B cell (primary cell): ENCODE measurements at regions of chr14 and their contacts with region 1.

Region 1: DNA sequence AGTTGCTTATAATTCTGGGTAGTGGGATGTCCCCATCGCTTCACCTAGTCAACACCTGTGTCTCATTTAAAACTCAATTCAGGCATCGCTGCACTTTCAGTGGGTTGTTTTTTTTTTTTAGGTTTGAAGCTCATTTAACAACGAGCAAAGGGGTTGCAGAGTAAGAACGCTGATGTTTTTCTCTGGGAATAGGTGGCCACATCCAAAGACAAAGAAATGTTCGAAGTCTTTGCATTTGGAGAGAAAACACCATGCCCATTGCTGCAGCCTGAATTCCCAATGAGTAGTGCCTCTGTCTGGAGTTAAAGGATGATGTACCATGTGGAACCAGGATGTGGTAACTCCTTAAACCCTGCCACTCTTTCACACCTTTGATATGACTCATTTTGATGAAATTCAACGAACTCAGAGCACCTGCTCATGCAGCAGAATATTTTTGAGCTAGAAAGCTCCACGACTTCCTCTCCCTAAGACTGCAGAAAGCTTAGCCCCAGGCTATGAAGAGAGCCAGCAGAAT is 35.1 kb upstream of the BATF start:
- DNase-seq: no peak
- ATAC-seq: no peak
- H3K4me3 ChIP-seq: no peak overlapping the region
- H3K4me3 Mint-ChIP-seq: no peak overlapping the region
- H3K27ac ChIP-seq: no peak overlapping the region
- H3K27ac Mint-ChIP-seq: peak overlapping the region; percentile 8
- H3K4me1 ChIP-seq: peaks cover 0 to 8% of the 10 kb centered on the region in 2 donors
- H3K4me1 Mint-ChIP-seq: peaks cover 12% of the 10 kb centered on the region
- H3K27me3 ChIP-seq: peaks cover 0 to 11% (median 0%) of the 10 kb centered on the region in 4 experiments
- H3K27me3 Mint-ChIP-seq: no peaks in the 10 kb centered on the region
- CTCF ChIP-seq: no peak

Region 2: GRCh38 chr14:75132382-75133086 is 354.7 kb before region 1 on chr14:
- CTCF ChIA-PET with region 1: interaction called, 7 read pairs
- POLR2A ChIA-PET with region 1: no interaction called
- intact Hi-C with region 1: loop called (anchors 1 kb)
- DNase-seq: peak; percentile 85
- ATAC-seq: peak; percentile 95
- H3K4me3 ChIP-seq: no peak overlapping the region
- H3K4me3 Mint-ChIP-seq: no peak overlapping the region
- H3K27ac ChIP-seq: peak overlapping the region in 1 of 2 donors; percentile 49
- H3K27ac Mint-ChIP-seq: peak overlapping the region; percentile 3
- H3K4me1 ChIP-seq: peaks cover 4 to 5% of the 10 kb centered on the region in 2 donors
- H3K4me1 Mint-ChIP-seq: peaks cover 14% of the 10 kb centered on the region
- H3K27me3 ChIP-seq: no peaks in the 10 kb centered on the region
- H3K27me3 Mint-ChIP-seq: no peaks in the 10 kb centered on the region
- CTCF ChIP-seq: peak; percentile 78

Region 3: DNA sequence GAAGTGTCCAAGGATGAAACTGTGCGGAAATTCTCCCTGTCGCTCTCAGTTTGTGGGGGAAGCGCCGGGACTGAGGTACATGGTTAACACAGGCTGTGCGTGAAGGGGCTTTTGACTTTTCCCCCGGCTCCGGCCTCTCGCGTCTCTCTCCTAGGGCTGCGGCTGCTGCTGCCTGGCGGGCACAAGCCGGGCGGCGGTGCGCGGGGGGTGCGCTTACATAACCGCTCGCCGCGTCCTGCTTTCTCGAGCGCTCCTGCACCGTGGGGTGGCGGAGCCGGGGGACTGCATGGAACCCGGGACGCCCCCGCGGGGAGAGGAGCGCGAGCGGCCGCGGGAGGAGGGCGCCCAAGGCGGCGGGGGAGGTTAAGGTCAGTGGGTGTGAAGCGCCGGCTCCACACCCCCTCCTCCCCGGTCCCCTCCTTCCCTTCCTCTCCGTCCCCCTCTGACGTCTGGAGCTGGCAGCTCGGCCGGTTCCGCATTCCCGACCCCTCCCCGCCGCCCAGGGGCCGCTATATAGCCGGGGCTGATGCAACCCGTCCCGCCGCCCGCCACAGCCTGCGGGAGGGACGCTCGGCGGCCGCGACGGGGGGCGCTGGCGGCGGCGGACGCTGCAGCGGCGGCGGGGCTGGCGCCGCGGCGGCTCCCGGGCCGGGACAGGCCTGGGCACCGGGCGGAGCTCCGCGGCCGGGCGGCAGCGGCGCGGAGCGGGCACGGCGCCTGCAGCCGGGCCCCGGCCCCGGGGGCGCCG is 59.6 kb before region 1 on chr14 and contains the start of gene JDP2:
- CTCF ChIA-PET with region 1: interaction called, 4 read pairs
- POLR2A ChIA-PET with region 1: no interaction called
- intact Hi-C with region 1: loop called (anchors 5 kb)
- DNase-seq: peak; percentile 77
- ATAC-seq: peak; percentile 53
- H3K4me3 ChIP-seq: peak within 1 kb of the TSS; percentile 45 to 86 (median 72)
- H3K4me3 Mint-ChIP-seq: peak within 1 kb of the TSS; percentile 94
- H3K27ac ChIP-seq: peak within 1 kb of the TSS; percentile 86
- H3K27ac Mint-ChIP-seq: peak within 1 kb of the TSS; percentile 99
- H3K4me1 ChIP-seq: peaks cover 23 to 30% of the 10 kb centered on the region in 2 donors
- H3K4me1 Mint-ChIP-seq: peaks cover 38% of the 10 kb centered on the region
- H3K27me3 ChIP-seq: no peaks in the 10 kb centered on the region
- H3K27me3 Mint-ChIP-seq: no peaks in the 10 kb centered on the region
- CTCF ChIP-seq: no peak
- total RNA-seq, gene JDP2: 17.0 and 17.9 TPM in 2 replicates

Region 4: GRCh38 chr14:75476274-75476995 is 10.8 kb before region 1 on chr14:
- CTCF ChIA-PET with region 1: interaction called, 16 read pairs
- POLR2A ChIA-PET with region 1: no interaction called
- intact Hi-C with region 1: no loop called
- DNase-seq: no peak
- ATAC-seq: peak; percentile 82
- H3K4me3 ChIP-seq: no peak overlapping the region
- H3K4me3 Mint-ChIP-seq: peak overlapping the region; percentile 2
- H3K27ac ChIP-seq: no peak overlapping the region
- H3K27ac Mint-ChIP-seq: peak overlapping the region; percentile 67
- H3K4me1 ChIP-seq: peaks cover 1 to 27% of the 10 kb centered on the region in 2 donors
- H3K4me1 Mint-ChIP-seq: peaks cover 29% of the 10 kb centered on the region
- H3K27me3 ChIP-seq: no peaks in the 10 kb centered on the region
- H3K27me3 Mint-ChIP-seq: no peaks in the 10 kb centered on the region
- CTCF ChIP-seq: no peak

Region 5: DNA sequence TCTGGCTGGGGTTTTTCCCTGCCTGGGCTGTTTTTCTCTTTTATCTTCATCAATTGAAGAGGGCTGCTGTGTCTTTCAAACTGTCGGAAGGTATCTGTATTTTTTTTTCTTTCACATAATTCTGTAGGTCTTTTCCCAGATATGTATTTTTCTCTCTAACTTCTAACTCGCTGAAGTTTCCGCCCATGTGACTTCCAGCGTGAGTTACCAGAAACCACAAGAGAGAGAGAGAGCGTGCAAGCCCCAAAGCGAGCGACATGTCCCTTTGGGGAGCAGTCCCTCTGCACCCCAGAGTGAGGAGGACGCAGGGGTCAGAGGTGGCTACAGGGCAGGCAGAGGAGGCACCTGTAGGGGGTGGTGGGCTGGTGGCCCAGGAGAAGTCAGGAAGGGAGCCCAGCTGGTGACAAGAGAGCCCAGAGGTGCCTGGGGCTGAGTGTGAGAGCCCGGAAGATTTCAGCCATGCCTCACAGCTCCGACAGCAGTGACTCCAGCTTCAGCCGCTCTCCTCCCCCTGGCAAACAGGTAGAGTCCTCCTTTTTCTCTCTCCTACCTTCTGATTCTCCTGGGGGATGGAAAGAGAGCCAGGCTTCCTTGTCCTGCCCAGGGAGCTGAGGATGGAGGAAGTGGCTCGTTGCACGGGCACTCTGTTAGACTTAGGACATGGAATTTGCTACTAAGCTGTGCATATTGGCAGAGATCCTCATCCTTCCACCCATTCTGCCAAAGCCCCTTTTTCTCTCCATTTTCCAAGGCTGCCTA is 35.2 kb after region 1 on chr14 and contains the start of gene BATF:
- CTCF ChIA-PET with region 1: interaction called, 15 read pairs
- POLR2A ChIA-PET with region 1: no interaction called
- intact Hi-C with region 1: no loop called
- DNase-seq: peak; percentile 83
- ATAC-seq: peak; percentile 71
- H3K4me3 ChIP-seq: peak within 1 kb of the TSS; percentile 53 to 80 (median 78)
- H3K4me3 Mint-ChIP-seq: peak within 1 kb of the TSS; percentile 99
- H3K27ac ChIP-seq: peak within 1 kb of the TSS; percentile 68 to 78
- H3K27ac Mint-ChIP-seq: peak within 1 kb of the TSS; percentile 98
- H3K4me1 ChIP-seq: peaks cover 35 to 51% of the 10 kb centered on the region in 2 donors
- H3K4me1 Mint-ChIP-seq: peaks cover 69% of the 10 kb centered on the region
- H3K27me3 ChIP-seq: no peaks in the 10 kb centered on the region
- H3K27me3 Mint-ChIP-seq: no peaks in the 10 kb centered on the region
- CTCF ChIP-seq: no peak
- total RNA-seq, gene BATF: 13.9 and 16.4 TPM in 2 replicates